ENCODE measurements at regions of chr22 and their contacts with region 1.

Region 1: GRCh38 chr22:27107824-27108223 is 450.4 kb downstream of the MIAT start:
- DNase-seq: peak; percentile 86 to 92
- ATAC-seq: peak; percentile 49
- H3K4me3 ChIP-seq: no peak overlapping the region
- H3K27ac ChIP-seq: peak overlapping the region in 1 of 2 donors; percentile 69
- H3K4me1 ChIP-seq: peaks cover 8 to 13% of the 10 kb centered on the region in 2 donors
- H3K27me3 ChIP-seq: no peaks in the 10 kb centered on the region

Region 2: GRCh38 chr22:27019827-27020226 is 88.0 kb before region 1 on chr22:
- intact Hi-C with region 1: loop called (anchors 5 kb)
- DNase-seq: peak; percentile 57 to 80
- ATAC-seq: peak; percentile 62
- H3K4me3 ChIP-seq: no peak overlapping the region
- H3K27ac ChIP-seq: peak overlapping the region; percentile 86
- H3K4me1 ChIP-seq: no peaks in the 10 kb centered on the region
- H3K27me3 ChIP-seq: no peaks in the 10 kb centered on the region

Region 3: DNA sequence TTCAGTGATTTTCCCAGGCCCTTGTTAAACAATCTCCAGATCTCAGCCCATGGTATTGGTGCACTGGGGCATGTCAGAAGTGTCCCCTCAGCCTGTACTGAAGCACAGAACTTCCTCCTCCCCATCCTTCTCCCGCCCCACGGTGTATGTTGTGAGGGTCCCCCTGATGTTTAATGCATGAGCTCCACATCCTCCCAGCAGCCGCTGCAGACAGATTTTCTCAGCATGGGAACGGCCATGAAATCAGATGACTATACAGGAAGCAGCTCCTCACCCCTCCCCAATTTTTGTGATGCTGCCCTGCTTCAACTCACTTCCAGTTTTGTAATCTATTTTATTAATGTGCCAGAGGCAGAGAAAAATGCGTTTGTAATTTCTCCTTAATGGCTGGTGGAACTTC is 44.4 kb before region 1 on chr22:
- intact Hi-C with region 1: no loop called
- DNase-seq: no peak
- ATAC-seq: no peak
- H3K4me3 ChIP-seq: no peak overlapping the region
- H3K27ac ChIP-seq: no peak overlapping the region
- H3K4me1 ChIP-seq: peaks cover 0 to 3% of the 10 kb centered on the region in 2 donors
- H3K27me3 ChIP-seq: no peaks in the 10 kb centered on the region

Region 4: DNA sequence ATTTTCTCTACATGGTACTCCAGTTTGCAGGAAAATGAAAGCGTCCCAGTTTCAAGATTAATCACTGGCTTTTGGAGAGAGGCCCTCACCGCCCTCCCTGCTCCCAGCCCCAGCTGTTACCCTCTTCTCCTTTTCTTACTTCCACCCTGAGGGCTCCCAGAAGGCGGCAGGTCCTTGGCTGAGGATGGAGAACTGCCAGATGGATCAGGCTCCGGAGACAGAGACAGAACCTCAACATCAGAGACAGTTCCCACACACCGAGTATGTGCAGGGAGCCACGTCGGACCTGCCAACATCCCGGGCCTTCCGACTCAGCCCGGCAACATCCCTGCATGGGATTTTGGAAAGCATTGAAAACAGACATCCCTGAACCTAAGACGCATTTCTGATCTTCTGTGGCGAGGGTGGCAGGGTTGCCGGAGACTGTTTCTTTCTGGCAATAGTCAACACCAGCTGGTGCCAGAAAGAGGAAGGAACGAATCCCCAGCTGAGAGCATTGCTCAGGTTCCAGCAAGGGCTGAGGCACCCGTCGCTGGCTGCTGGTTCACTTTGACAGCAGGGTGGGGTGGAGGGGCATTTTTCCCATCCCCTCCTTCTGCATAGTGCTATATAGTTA is 16.6 kb after region 1 on chr22:
- intact Hi-C with region 1: no loop called
- DNase-seq: peak in 1 of 2 donors; percentile 78
- ATAC-seq: peak; percentile 70
- H3K4me3 ChIP-seq: no peak overlapping the region
- H3K27ac ChIP-seq: peak overlapping the region in 1 of 2 donors; percentile 46
- H3K4me1 ChIP-seq: no peaks in the 10 kb centered on the region
- H3K27me3 ChIP-seq: no peaks in the 10 kb centered on the region

Region 5: GRCh38 chr22:27212617-27213177 is 104.9 kb after region 1 on chr22:
- intact Hi-C with region 1: loop called in 1 of 2 experiments (anchors 5 kb)
- DNase-seq: peak in 1 of 2 donors; percentile 84
- ATAC-seq: peak; percentile 86
- H3K4me3 ChIP-seq: no peak overlapping the region
- H3K27ac ChIP-seq: peak overlapping the region in 1 of 2 donors; percentile 91
- H3K4me1 ChIP-seq: peaks cover 2 to 4% of the 10 kb centered on the region in 2 donors
- H3K27me3 ChIP-seq: no peaks in the 10 kb centered on the region